Aorta (tissue), 5 donors: ENCODE measurements at regions of chr15 and their contacts with region 1.

Region 1: DNA sequence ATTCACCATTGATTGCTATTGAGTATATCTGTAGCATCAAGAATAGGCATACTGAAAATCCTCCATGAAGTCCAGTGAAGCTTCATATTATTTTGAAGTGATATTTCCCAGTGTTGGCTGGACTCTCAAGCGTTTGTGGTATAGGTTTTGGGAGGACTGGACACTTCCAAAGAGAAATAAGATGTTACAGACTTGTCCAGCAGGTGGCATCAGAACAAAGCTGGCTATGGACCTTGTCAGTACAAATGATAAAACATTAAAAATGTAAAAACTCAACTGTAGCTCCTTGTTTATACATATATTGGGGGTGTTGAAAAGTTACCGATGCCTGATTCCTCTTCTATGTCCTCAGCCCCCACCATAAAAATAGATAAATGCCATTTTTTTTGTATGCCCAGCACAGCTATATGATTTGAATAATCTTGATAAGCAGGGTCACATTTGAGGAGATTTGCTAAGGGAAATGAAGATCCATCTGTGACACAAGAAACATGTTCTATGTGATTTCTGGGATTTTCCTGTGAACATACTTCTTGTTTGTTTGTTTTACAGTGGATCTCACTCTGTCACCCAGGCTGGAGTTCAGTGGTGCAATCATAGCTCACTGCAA is 54.5 kb upstream of the GOLGA6B start:
- DNase-seq: no peak
- ATAC-seq: no peak
- H3K4me3 ChIP-seq: no peak overlapping the region
- H3K27ac ChIP-seq: no peak overlapping the region
- H3K4me1 ChIP-seq: no peaks in the 10 kb centered on the region
- H3K27me3 ChIP-seq: no peaks in the 10 kb centered on the region

Region 2: GRCh38 chr15:72487070-72487797 is 112.7 kb before region 1 on chr15:
- intact Hi-C with region 1: no loop called
- DNase-seq: no peak
- ATAC-seq: no peak
- H3K4me3 ChIP-seq: no peak overlapping the region
- H3K27ac ChIP-seq: no peak overlapping the region
- H3K4me1 ChIP-seq: peaks cover 0 to 10% of the 10 kb centered on the region in 2 donors
- H3K27me3 ChIP-seq: no peaks in the 10 kb centered on the region

Region 3: GRCh38 chr15:72671535-72671934 is 71.6 kb after region 1 on chr15:
- intact Hi-C with region 1: loop called in 1 of 2 experiments (anchors 10 kb)
- DNase-seq: no peak
- ATAC-seq: no peak
- H3K4me3 ChIP-seq: no peak overlapping the region
- H3K27ac ChIP-seq: no peak overlapping the region
- H3K4me1 ChIP-seq: no peaks in the 10 kb centered on the region
- H3K27me3 ChIP-seq: no peaks in the 10 kb centered on the region